Sciatic nerve (tissue), 2 donors: ENCODE measurements at regions of chr15 and their contacts with region 1.

Region 1: GRCh38 chr15:94747510-94747909 is 516.1 kb downstream of the MCTP2 start:
- DNase-seq: no peak
- ATAC-seq: no peak

Region 2: DNA sequence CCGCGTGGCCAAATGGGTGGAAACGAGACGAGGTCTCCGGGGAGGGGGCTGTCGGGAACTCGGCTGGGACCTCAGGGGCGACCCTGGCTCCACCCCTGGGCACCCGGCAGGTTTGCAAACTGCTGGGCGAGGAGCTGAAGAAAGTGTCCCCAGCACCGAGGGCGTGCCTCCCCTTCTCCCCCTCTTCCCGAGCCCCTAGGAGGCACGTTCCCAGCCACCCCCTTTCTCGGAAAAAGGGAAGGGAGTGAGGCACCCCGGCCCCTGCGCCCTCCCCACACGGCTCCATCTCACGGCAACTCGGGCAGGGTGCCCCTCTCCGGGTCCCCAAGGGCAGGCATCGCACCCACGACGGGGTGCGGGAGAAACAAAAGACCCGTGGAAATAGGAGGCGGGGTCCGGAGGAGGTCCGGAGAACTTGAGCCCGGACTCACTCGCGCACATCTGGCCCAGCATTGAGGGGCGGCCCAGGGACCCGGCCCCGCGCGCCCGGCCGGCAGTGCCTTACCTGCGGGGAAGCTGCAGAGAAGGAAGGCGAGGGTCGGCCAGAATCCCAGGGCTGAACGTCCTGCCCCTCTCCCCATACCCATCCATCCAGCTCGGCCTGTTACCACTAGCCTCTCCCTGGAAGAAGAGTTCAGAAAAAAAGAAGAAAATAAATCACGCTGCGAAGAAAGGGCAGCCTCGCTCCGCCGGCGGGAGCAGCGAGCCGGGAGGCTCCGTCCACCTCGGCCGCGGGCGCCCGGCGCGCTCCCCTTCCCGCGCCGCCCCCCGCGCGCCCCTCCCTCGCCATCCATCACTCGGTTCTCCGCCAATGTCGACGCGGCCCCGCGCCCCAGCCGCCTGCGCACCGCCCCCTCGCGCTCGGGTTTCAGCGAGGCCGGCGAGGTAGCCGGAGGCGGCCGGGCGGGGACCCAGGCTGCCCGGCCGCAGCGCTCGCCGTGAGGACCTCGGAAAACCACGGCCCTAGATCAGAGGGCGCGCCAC is 1674.8 kb before region 1 on chr15:
- intact Hi-C with region 1: no loop called
- DNase-seq: peak; percentile 92
- ATAC-seq: peak; percentile 80

Region 3: DNA sequence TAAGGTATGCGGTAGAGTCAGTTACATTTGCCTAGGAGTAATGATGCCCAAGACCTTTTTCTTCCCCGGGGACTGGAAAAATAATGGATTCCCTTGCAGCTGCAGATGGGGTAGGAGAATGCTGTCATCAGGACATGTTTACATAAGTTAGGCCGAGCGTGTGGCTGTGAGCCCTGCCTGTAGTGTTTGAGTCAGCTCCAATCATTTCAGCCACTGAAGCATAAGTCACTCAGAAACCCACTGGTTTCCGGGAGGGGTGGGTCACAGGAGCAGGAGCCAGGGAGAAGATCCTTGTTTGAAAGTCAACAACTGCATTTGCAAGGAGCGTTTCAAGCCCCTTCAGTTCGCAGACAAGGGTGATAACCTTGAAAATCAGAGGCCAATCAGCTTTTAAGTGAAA is 46.1 kb after region 1 on chr15:
- intact Hi-C with region 1: loop called (anchors 2 kb)
- DNase-seq: no peak
- ATAC-seq: no peak